Activated naive CD4-positive, alpha-beta T cell treated with anti-CD3 and anti-CD28 coated beads for 36 hours (primary cell): ENCODE measurements at regions of chr12 and their contacts with region 1.

Region 1: DNA sequence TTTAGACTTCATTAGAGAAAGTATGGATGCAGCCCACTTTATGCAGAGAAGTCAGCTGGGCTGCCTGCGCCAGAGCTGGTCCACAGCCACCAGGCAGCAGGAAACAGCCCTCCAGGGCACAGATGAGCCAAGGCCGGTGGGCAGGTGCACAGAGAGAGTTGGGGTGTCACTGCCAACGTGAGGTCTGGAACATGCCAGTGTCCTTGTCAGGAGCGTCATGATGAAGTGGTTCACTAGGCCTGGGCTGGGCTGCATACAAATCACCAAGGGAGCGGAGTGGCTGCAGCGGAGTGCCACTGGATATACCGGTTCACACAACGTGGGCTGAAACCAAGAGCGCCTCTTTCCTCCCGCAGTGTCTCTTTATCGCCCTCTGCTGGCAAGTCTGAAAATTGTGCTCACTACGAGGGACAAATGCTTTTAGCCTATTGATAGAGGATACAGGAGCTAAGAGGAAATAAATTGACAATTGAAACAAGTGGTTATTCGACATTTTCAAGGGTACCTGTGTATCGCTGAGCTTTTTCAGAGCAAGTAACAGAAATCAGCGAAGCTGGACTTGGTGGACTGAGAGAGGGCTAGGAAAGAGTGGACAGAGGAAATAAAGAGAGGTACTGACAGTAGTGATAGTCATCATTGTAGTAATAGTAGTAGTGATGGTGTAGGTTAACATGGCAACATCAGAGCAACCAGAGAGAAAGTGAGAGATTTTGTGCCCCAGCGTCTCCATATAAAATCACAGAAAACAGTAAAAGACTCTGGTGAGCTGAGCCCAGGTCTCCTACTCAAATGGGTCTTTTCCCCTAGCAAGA is 52.0 kb upstream of the ITPR2 start:
- DNase-seq: peak; percentile 92
- H3K4me3 Mint-ChIP-seq: peak overlapping the region; percentile 58
- H3K27ac Mint-ChIP-seq: no peak overlapping the region
- H3K4me1 Mint-ChIP-seq: peaks cover 6% of the 10 kb centered on the region
- H3K27me3 Mint-ChIP-seq: peaks cover 10% of the 10 kb centered on the region

Region 2: GRCh38 chr12:26434299-26435068 is 450.5 kb before region 1 on chr12:
- CTCF ChIA-PET with region 1: no interaction called
- intact Hi-C with region 1: loop called (anchors 2 kb)
- DNase-seq: peak; percentile 34
- H3K4me3 Mint-ChIP-seq: no peak overlapping the region
- H3K27ac Mint-ChIP-seq: no peak overlapping the region
- H3K4me1 Mint-ChIP-seq: no peaks in the 10 kb centered on the region
- H3K27me3 Mint-ChIP-seq: no peaks in the 10 kb centered on the region

Region 3: DNA sequence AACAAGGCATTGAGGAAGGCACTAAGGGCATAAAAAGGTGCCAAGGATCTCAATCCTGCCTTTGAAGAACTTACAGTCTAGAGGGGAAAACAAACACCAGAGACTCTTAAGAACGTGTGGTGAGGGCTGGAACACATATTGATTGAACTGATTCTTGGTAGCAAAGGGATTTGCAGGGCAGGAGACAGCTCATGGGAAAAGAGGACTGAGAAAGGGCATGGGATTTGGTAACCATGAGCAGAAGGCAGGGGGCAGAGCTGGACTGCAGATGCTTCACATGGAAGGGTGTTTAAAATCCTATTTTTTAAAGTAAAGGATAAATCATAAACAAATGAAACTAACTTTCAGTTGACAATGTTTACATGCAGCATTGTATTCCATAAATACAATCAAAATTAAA is 255.1 kb before region 1 on chr12:
- CTCF ChIA-PET with region 1: no interaction called
- intact Hi-C with region 1: loop called (anchors 2 kb)
- DNase-seq: peak; percentile 11
- H3K4me3 Mint-ChIP-seq: no peak overlapping the region
- H3K27ac Mint-ChIP-seq: no peak overlapping the region
- H3K4me1 Mint-ChIP-seq: no peaks in the 10 kb centered on the region
- H3K27me3 Mint-ChIP-seq: no peaks in the 10 kb centered on the region

Region 4: DNA sequence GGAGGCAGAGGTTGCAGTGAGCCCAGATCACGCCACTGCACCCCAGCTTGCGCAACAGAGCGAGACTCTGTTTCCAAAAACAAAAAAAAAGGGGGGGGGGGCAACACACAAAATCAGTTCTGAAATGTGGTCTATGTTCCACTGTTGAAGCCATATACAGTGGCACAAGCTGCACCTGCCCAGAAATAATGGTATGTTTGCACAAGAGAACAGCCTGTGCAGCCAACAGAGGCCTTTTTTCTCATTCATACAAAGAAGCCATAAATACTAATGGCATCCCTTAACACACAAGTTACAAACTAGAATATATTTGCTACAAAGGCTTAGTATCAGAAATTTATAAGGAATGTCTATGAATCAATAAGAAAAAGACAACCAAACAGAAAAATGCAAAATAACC is 89.1 kb before region 1 on chr12:
- CTCF ChIA-PET with region 1: no interaction called
- intact Hi-C with region 1: no loop called
- DNase-seq: no peak
- H3K4me3 Mint-ChIP-seq: no peak overlapping the region
- H3K27ac Mint-ChIP-seq: no peak overlapping the region
- H3K4me1 Mint-ChIP-seq: peaks cover 24% of the 10 kb centered on the region
- H3K27me3 Mint-ChIP-seq: no peaks in the 10 kb centered on the region

Region 5: DNA sequence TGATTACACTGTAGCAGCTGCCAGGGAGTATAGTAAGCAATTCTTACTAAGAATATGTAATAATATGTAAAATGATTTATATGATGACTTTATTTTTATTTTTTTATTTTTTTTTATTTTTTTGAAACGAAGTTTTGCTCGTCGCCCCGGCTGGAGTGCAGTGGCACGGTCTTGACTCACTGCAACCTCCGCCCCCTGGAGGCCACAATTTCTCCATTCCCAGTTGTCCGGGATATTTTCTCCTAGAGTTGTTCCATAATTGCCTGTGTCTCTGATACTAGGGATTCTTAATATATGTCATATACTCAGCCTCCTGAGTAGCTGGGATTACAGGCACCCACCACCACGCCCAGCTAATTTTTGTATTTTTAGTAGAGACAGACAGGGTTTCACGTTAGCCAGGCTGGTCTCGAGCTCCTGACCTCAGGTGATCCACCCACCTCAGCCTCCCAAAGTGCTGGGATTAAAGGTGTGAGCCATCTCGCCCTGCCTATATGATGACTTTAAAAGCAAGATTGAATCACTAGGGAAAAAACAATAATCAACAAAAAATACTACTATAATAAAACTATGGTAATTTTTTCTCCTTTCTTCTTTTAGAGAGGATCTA is 39.8 kb before region 1 on chr12:
- CTCF ChIA-PET with region 1: interaction called, 10 read pairs
- intact Hi-C with region 1: no loop called
- DNase-seq: peak; percentile 24
- H3K4me3 Mint-ChIP-seq: no peak overlapping the region
- H3K27ac Mint-ChIP-seq: no peak overlapping the region
- H3K4me1 Mint-ChIP-seq: peaks cover 10% of the 10 kb centered on the region
- H3K27me3 Mint-ChIP-seq: peaks cover 9% of the 10 kb centered on the region

Region 6: GRCh38 chr12:26853303-26854030 is 31.5 kb before region 1 on chr12:
- CTCF ChIA-PET with region 1: interaction called, 21 read pairs
- intact Hi-C with region 1: loop called (anchors 1 kb)
- DNase-seq: peak; percentile 86
- H3K4me3 Mint-ChIP-seq: no peak overlapping the region
- H3K27ac Mint-ChIP-seq: no peak overlapping the region
- H3K4me1 Mint-ChIP-seq: no peaks in the 10 kb centered on the region
- H3K27me3 Mint-ChIP-seq: peaks cover 3% of the 10 kb centered on the region

Region 7: DNA sequence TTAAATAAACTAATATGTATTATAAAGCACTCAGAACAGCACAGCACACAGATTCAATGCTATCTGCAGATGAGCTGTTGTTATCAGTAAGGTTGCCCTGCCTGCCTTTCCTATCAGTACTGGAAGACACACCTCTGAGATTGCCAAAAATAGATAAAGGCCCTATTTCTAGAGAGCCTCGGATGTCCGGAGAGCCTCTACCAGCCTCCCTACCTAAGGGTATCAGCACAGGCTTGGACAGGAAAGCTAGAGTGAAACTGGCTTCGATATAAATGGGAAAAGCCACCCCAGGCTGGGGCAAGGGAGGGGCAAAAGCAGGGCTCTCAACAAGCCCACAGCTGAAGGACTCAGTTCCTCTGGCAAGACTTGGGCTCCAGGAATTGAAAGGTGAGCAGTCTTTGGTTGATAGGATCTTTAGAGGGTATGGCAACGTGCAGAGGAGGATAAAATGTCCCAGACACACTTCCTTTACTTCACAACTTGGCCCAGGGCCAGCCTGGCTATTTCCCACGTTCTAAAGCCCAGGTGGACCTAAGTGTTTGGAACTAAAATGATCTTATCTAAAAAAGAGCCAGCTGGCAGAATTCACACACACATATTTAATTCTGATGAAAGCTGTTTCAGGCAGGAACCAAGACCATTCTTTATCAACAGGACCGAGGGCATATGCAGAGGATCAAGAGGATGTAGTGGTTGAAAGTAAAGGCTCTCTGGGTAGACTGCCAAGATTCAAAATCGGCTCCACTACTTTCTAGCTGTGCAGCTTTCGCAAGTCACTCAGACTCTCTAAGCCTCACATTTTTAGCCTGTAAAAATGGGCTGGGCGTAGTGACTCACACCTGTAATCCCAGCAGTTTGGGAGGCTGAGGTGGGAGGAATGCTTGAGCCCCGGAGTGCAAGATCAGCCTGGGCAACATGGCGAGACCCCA is 14.2 kb before region 1 on chr12:
- CTCF ChIA-PET with region 1: interaction called, 36 read pairs
- intact Hi-C with region 1: no loop called
- DNase-seq: no peak
- H3K4me3 Mint-ChIP-seq: no peak overlapping the region
- H3K27ac Mint-ChIP-seq: no peak overlapping the region
- H3K4me1 Mint-ChIP-seq: peaks cover 13% of the 10 kb centered on the region
- H3K27me3 Mint-ChIP-seq: peaks cover 16% of the 10 kb centered on the region

Region 8: DNA sequence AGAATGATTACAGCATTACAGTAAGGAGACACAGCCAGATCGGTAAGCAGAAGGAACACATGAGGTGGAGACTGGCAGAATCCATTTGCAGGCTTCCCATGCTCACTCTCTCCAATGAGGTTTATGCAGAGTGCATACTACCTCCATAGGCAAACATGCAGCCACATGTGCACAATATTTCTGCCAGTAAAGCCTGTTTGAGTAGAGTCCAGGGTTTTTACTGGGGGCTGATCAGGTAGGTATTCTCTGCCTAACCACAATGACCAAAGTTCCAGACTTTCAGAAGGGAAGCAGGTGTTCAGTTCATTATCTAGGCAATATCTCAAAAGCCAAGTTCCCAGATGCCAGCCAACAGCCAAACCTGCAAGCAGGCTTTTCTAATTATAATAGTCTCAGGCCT is 21.7 kb after region 1 on chr12:
- CTCF ChIA-PET with region 1: interaction called, 13 read pairs
- intact Hi-C with region 1: no loop called
- DNase-seq: no peak
- H3K4me3 Mint-ChIP-seq: no peak overlapping the region
- H3K27ac Mint-ChIP-seq: no peak overlapping the region
- H3K4me1 Mint-ChIP-seq: no peaks in the 10 kb centered on the region
- H3K27me3 Mint-ChIP-seq: no peaks in the 10 kb centered on the region

Region 9: GRCh38 chr12:27001663-27002062 is 116.7 kb after region 1 on chr12:
- CTCF ChIA-PET with region 1: no interaction called
- intact Hi-C with region 1: no loop called
- DNase-seq: no peak
- H3K4me3 Mint-ChIP-seq: no peak overlapping the region
- H3K27ac Mint-ChIP-seq: no peak overlapping the region
- H3K4me1 Mint-ChIP-seq: peaks cover 15% of the 10 kb centered on the region
- H3K27me3 Mint-ChIP-seq: no peaks in the 10 kb centered on the region